Activated T-helper 1 cell treated with anti-CD3 and anti-CD28 coated beads, Interleukin-12 subunit alpha, Interleukin-12 subunit beta, Interleukin-2, Interleukin-4 antibody, amounts not matched to agents 30 ng/mL and 10 ng/mL and 1 ng/mL, durations not matched to agents 14 hours and 24 hours and 36 hours (primary cell): ENCODE measurements at regions of chr15 and their contacts with region 1.

Region 1: DNA sequence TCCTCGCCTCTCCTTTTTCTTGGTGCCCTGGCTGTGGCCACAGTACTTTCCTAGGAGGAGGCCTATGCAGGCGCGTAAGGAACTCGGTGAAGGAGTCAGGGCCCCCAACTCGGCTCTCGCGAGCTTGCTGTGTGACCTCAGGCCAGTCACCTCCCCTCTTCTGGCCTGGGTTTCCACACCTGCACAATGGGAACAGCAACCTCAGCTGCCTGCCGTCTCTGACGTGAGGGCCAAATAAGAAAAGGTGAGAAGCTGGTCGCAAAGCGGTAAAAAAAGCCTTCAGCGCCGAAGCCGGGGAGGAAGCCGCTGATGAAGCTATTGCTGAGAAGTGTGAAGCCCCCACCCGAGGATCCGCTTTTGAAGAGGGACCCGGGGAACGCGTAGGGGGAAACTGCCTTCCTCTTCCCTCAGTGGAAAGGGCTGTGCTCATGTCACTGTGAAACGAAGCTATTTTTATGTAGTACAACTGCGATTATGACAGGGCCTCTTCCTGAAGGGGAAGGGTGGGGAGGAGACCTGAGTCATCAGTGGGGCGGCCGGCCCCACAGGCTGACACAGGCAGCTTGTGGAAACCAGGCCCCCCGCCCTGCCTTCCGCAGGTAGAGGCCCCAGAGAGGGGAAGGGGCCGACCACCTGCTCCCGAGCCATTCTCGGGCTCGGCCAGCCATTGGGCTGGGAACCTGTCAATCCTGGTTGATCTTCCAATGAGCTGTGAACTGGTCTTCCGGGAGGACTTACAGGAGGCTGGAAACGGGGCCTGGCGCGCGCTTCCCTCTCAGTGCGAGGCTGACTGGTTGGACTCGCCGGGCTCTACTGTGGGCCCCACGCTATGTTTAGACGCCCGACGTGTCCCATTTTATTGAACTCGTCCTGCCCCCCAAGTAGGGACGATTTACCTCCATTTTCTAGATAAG is 18.0 kb upstream of the ANKDD1A start:
- DNase-seq: peak; percentile 96
- H3K4me3 Mint-ChIP-seq: peak overlapping the region; percentile 93
- H3K27ac Mint-ChIP-seq: peak overlapping the region; percentile 100
- H3K4me1 Mint-ChIP-seq: peaks cover 75% of the 10 kb centered on the region
- H3K27me3 Mint-ChIP-seq: no peaks in the 10 kb centered on the region

Region 2: DNA sequence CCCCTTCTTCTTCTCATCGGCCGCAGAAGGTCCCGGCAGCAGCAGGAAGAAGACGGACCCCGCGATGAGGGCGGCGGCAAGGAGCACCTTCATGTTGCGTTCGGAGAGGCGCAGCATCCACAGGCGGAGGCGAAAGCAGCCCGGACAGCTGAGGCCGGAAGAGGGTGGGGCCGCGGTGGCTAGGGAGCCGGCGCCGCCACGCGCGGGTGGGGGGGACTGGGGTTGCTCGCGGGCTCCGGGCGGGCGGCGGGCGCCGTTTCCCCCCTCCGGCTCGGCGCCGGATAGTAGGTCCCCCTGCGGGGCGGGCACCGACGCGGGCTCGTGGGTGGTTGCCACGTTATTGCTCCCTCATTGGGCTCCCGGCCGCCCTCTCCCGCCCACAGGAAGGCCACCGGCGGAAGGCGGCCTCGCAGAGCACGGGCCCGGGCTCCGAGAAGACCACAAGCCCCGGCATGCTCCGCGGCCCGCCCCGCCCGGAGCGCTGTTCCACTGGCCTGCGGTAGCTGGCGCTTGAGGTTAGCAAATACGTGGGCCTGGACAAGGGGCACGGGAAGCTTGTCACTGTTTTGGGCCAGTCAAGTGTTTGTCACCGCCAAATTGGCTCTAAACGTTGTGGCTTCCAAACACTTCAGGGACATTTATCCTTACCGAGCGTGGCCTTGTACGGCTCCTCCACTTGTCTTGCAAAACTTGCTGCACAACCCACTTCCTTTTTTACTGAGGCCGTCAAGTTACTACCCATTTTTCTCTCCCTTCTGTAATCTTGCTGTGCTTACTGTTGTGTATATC is 730.7 kb before region 1 on chr15 and contains the start of gene PPIB:
- intact Hi-C with region 1: loop called (anchors 2 kb)
- DNase-seq: peak; percentile 97
- H3K4me3 Mint-ChIP-seq: peak within 1 kb of the TSS; percentile 94
- H3K27ac Mint-ChIP-seq: peak within 1 kb of the TSS; percentile 93
- H3K4me1 Mint-ChIP-seq: peaks cover 56% of the 10 kb centered on the region
- H3K27me3 Mint-ChIP-seq: no peaks in the 10 kb centered on the region
- total RNA-seq, gene PPIB: 383 and 388 TPM in 2 replicates

Region 3: DNA sequence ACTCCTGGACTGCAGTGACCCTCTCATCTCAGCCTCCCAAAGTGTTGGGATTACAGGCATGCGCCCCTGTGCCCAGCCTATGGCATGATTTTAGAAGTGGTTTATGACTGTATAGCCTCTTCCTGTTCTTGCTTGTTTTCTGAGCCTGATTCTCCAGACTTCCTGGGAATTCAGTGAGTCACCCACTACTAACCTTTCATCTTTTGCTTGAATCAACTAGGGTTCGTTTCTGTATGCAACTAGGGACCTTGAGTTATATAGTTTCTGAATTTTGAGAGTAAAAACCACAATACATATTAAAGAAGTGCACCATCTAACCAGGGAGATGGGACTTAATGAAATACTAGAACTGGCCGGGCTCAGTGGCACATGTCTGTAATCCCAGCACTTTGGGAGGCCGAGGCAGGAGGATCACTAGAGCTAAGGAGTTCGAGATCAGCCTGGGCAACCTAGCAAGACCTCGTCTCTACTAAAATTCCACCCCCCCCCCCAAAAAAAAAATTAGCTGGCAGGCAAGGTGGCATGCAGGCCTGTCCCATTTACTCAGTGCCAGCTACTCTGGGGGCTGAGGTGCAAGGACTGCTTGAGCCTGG is 357.4 kb before region 1 on chr15:
- intact Hi-C with region 1: no loop called
- DNase-seq: no peak
- H3K4me3 Mint-ChIP-seq: peak overlapping the region; percentile 13
- H3K27ac Mint-ChIP-seq: peak overlapping the region; percentile 66
- H3K4me1 Mint-ChIP-seq: peaks cover 38% of the 10 kb centered on the region
- H3K27me3 Mint-ChIP-seq: no peaks in the 10 kb centered on the region

Region 4: DNA sequence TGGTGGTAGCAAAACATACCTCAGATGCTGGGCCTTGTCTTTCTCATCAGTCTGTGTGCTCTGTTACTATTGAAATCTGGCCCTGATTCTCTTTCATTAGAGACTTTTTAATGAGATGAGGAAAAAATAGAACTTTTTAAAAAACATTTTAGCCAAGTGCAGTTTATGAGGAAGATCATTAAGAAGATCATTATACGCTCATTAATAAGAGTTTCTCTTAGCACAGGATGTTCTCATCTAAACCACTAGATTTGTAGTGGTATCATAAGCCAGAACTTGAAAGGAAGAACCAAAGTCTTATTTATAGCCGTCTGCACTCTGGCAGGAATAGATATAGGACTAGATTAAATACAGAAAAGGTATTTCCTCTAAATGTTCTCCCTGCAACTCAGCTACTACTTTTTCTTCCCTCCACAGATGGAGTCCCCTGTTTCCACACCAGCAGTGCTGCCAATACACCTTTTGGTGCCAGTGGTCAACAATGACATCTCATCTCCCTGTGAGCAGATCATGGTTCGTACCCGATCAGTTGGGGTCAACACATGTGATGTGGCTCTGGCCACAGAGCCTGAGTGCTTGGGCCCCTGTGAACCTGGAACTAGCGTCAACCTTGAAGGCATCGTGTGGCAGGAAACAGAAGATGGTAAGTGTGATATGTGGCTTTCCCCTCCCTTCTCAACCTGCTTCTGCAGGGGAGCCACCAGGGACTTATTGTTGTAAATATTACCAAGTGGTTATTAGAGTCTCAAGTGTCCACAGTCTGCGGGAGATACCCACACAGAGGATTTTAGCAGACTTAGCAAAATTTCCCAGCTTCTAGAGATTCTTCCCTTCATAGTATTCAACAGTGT is 271.1 kb before region 1 on chr15:
- intact Hi-C with region 1: loop called (anchors 10 kb)
- DNase-seq: peak; percentile 48
- H3K4me3 Mint-ChIP-seq: peak overlapping the region; percentile 53
- H3K27ac Mint-ChIP-seq: peak overlapping the region; percentile 80
- H3K4me1 Mint-ChIP-seq: peaks cover 76% of the 10 kb centered on the region
- H3K27me3 Mint-ChIP-seq: no peaks in the 10 kb centered on the region

Region 5: GRCh38 chr15:64841258-64842095 is 52.3 kb before region 1 on chr15 and contains the start of gene PLEKHO2:
- intact Hi-C with region 1: loop called (anchors 1 kb)
- DNase-seq: peak; percentile 90
- H3K4me3 Mint-ChIP-seq: peak within 1 kb of the TSS; percentile 92
- H3K27ac Mint-ChIP-seq: peak within 1 kb of the TSS; percentile 91
- H3K4me1 Mint-ChIP-seq: peaks cover 74% of the 10 kb centered on the region
- H3K27me3 Mint-ChIP-seq: no peaks in the 10 kb centered on the region
- total RNA-seq, gene PLEKHO2: 17.0 and 17.8 TPM in 2 replicates

Region 6: DNA sequence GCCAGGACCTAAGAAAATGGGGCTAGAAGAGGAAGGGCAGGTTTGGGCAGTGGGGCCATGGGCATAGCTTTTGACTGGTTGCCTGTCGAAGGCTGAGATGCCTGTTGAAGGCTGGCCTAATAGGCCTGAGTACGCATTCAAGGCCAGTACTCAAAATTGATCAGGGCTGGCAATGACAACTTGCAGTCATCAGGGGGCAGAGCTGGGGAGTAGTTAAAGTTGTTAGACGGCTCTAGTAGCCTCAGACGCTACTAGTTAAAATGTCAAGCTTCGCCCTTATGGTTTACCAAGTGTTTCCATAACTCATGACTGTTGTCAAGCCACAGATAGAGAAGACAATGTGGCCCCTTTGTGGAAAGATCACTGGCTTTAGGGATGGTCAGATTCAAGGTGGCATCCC is 67.3 kb after region 1 on chr15:
- intact Hi-C with region 1: no loop called
- DNase-seq: no peak
- H3K4me3 Mint-ChIP-seq: no peak overlapping the region
- H3K27ac Mint-ChIP-seq: no peak overlapping the region
- H3K4me1 Mint-ChIP-seq: no peaks in the 10 kb centered on the region
- H3K27me3 Mint-ChIP-seq: no peaks in the 10 kb centered on the region

Region 7: DNA sequence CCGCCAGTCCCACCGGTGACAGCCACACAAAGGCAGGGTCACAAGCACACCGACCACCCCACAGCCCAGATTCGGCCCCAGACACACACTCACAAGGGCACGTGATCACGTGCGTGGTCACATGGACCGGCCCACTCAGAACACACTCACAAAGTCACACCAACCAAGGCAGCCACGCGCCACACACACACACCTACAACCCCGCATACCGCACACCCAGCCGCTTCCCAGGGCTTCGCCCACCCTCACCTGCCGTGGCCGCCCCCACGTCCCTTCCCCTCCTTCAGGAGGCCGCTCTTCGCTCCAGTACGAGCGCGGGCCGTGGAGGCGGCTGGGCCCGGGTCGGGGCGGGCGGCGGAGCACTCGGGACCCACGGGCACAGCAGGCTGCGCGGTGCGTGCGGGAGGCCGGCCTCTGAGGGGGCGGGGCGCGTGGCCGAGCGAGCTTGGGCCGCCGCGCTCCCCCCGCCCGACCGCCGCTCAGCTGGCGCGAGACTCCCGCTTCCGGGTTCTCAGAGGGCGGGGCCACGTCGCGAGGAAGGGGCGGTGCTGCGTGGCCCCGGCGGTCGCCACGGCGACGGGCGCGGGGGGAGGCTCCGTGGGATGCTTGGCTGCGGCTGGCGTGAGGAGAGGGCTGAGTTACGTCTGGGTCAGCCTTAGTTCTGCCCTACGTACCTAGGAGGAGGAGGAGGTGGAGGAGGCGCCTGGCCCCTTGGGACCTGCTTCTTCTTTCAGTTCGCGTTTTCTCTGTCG is 95.9 kb after region 1 on chr15 and contains the start of gene SPG21:
- intact Hi-C with region 1: loop called (anchors 1 kb)
- DNase-seq: peak; percentile 92
- H3K4me3 Mint-ChIP-seq: peak within 1 kb of the TSS; percentile 99
- H3K27ac Mint-ChIP-seq: peak within 1 kb of the TSS; percentile 93
- H3K4me1 Mint-ChIP-seq: peaks cover 51% of the 10 kb centered on the region
- H3K27me3 Mint-ChIP-seq: no peaks in the 10 kb centered on the region
- total RNA-seq, gene SPG21: 70.2 and 73.3 TPM in 2 replicates

Region 8: GRCh38 chr15:65304389-65305144 is 410.8 kb after region 1 on chr15 and contains the start of gene RNU5B-1:
- intact Hi-C with region 1: loop called (anchors 5 kb)
- DNase-seq: peak; percentile 84
- H3K4me3 Mint-ChIP-seq: peak within 1 kb of the TSS; percentile 94
- H3K27ac Mint-ChIP-seq: peak within 1 kb of the TSS; percentile 95
- H3K4me1 Mint-ChIP-seq: peaks cover 28% of the 10 kb centered on the region
- H3K27me3 Mint-ChIP-seq: peaks cover 9% of the 10 kb centered on the region
- total RNA-seq, gene RNU5B-1: not detected in 2 replicates